HEK293 (cell line): ENCODE measurements at regions of chr7 and their contacts with region 1.

Region 1: DNA sequence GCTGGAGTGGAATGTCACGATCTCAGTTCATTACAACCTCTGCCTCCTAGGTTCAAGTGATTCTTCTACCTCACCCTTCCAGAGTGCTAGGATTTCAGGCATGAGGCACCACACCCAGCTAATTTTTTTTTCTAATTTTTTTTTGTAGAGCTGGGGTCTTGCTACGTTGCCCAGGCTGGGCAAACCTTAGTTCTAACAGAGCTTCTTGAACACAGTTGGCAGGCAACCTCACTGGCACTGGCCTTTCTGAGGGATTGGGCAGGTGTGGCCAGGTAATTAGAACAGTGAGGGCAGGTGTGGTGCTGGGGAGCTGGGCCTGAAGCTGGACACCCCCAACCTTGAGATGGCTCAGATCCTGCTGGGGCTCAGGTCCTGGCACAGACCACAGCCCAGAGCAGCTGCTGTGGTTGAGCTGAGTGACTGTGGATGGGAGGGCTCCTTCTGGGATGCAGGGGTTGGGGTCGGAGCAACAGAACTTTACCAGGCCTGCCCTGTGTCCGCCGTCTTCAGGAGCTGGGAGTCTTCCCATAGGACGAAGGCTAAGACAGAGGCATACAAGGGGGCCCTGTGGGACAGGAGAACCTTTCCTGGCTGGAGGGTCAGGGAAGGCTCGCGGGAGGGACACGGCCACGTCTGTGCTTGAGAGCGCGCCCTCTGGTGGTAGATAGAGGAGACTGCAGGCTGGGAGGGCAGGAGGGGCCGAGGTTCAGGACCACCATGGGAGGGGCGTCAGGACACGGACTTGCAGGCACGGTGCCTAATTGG is 48.2 kb downstream of the COL26A1 start:
- H3K4me3 ChIP-seq: no peak overlapping the region
- H3K27ac ChIP-seq: no peak overlapping the region
- H3K4me1 ChIP-seq: no peaks in the 10 kb centered on the region
- CTCF ChIP-seq: peak; percentile 94

Region 2: GRCh38 chr7:101321491-101322401 is 89.2 kb before region 1 on chr7 and contains the start of gene IFT22:
- CTCF ChIA-PET with region 1: interaction called, 11 read pairs
- POLR2A ChIA-PET with region 1: interaction called, 6 read pairs
- H3K4me3 ChIP-seq: peak within 1 kb of the TSS; percentile 87
- H3K27ac ChIP-seq: peak within 1 kb of the TSS; percentile 78
- H3K4me1 ChIP-seq: no peaks in the 10 kb centered on the region
- CTCF ChIP-seq: peak; percentile 49

Region 3: DNA sequence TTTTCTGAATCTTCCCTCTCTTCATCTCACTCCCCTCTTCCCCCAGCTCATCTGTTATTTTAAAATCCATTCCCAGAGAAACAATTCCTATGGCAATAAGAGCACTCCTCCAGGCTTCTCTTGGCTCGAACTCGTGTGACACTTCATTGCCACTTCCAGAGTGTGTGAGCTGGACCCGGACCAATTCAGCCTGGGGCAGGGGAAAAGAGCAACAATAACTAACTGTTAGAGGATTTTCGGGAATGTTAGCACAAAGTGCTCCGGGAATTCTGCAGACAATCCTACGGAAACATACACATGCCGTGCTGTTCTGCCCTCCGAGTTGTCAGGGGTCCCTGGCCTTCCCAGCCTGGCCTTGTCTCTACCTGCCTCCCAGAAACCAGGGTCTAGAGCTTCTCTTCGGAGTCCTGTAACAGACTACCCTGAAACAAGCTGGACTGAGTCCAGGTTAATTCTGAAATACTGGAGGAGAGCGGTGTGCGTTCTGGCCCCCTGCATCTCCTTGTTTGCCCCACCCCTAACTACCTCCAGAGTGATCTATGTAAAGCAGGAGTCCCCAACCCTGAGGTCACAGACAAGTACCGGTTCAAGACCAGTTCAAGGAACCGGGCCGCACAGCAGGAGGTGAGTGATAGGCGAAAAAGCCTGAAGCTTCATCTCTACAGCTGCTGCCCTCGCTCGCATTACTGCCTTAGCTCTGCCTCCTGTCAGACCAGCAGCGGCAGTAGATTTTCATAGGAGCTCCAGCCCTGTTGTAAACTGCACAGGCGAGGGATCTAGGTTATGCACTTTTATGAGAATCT is 36.9 kb before region 1 on chr7:
- CTCF ChIA-PET with region 1: interaction called, 36 read pairs
- POLR2A ChIA-PET with region 1: no interaction called
- H3K4me3 ChIP-seq: no peak overlapping the region
- H3K27ac ChIP-seq: no peak overlapping the region
- H3K4me1 ChIP-seq: no peaks in the 10 kb centered on the region; the same call in 1 of the 2 replicates
- CTCF ChIP-seq: no peak

Region 4: GRCh38 chr7:101422361-101423195 is 11.7 kb after region 1 on chr7:
- CTCF ChIA-PET with region 1: interaction called, 14 read pairs
- POLR2A ChIA-PET with region 1: no interaction called
- H3K4me3 ChIP-seq: no peak overlapping the region
- H3K27ac ChIP-seq: no peak overlapping the region
- H3K4me1 ChIP-seq: no peaks in the 10 kb centered on the region
- CTCF ChIP-seq: no peak

Region 5: GRCh38 chr7:101507791-101508252 is 96.9 kb after region 1 on chr7:
- CTCF ChIA-PET with region 1: interaction called, 10 read pairs
- POLR2A ChIA-PET with region 1: no interaction called
- H3K4me3 ChIP-seq: no peak overlapping the region
- H3K27ac ChIP-seq: no peak overlapping the region
- H3K4me1 ChIP-seq: no peaks in the 10 kb centered on the region
- CTCF ChIP-seq: peak; percentile 94